ENCODE measurements at regions of chr14 and their contacts with region 1.

Region 1: DNA sequence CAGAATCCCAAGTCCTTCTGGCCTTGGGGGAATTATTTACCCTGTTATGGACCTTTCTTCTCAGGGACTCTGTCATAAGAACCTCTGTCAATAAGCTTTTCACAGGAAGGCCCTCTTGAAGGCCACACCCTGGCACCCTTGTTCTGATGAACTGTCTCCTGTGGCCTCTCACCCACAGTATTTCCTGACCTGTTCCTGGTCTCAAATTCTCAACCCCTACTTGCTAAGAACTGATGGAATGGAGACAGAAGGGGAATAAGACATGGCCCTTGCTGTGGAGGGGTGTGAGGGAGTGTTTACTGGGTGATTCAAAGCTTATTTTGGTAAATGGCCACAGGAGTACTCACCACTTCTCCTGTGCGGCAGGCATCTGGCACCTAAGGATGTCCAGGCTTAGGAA is 1082.9 kb downstream of the BCL11B start:
- DNase-seq: peak; percentile 68
- ATAC-seq: peak; percentile 69
- H3K4me3 Mint-ChIP-seq: peak overlapping the region; percentile 58
- H3K27ac Mint-ChIP-seq: peak overlapping the region; percentile 92
- H3K4me1 Mint-ChIP-seq: peaks cover 96% of the 10 kb centered on the region
- H3K27me3 Mint-ChIP-seq: no peaks in the 10 kb centered on the region

Region 2: GRCh38 chr14:98173305-98173704 is 15.8 kb before region 1 on chr14:
- CTCF ChIA-PET with region 1: interaction called, 45 read pairs
- POLR2A ChIA-PET with region 1: interaction called, 52 read pairs
- DNase-seq: peak; percentile 80
- ATAC-seq: peak; percentile 35
- H3K4me3 Mint-ChIP-seq: peak overlapping the region; percentile 70
- H3K27ac Mint-ChIP-seq: peak overlapping the region; percentile 84
- H3K4me1 Mint-ChIP-seq: peaks cover 95% of the 10 kb centered on the region
- H3K27me3 Mint-ChIP-seq: no peaks in the 10 kb centered on the region

Measured in activated CD8-positive, alpha-beta T cell treated with anti-CD3 and anti-CD28 coated beads, Interleukin-2, amount 10 ng/mL, durations not matched to agents 7 days and 5 days (primary cell).